Activated naive CD8-positive, alpha-beta T cell treated with anti-CD3 and anti-CD28 coated beads, Interleukin-2, amount 10 ng/mL, durations not matched to agents 7 days and 5 days (primary cell): ENCODE measurements at regions of chr6 and their contacts with region 1.

Region 1: DNA sequence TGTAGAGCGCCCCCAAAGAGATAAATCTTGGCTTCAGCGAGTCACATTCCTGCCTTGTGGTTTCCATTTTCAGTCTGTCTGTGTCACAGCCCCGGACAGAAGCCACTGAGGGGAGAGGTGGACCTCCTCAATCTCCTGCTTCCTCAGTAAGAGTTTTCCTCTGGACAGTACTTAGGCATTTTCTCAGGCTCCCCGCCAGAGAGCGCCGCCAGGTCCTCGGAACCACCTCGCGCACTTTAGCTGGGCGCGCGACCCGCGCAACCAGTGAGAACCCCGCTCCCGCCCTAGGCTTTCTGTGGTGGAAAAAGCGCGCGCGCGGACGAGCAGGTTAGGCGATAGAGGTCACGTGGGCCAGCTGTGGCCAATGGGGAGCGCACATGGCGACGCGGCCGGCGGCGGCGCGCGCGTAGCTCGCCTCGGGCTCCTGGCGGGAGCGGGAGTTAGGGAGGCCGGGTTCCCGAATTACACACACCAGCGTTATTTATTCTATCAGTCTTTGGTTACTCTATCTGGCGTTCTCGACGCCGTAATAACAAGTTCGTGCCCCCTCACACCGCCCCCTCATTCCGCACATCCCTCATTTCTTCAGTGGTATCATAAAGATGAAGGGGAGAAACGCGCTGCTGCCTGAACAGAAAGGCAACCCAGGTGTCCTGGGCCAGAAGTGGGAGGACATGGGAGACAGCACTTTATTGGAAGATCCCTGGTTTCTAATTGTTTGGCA is 19.4 kb downstream of the PXT1 start:
- DNase-seq: peak; percentile 97
- ATAC-seq: peak; percentile 97
- H3K4me3 Mint-ChIP-seq: peak overlapping the region; percentile 90
- H3K27ac Mint-ChIP-seq: peak overlapping the region; percentile 86
- H3K4me1 Mint-ChIP-seq: peaks cover 14% of the 10 kb centered on the region
- H3K27me3 Mint-ChIP-seq: peaks cover 7% of the 10 kb centered on the region

Region 2: GRCh38 chr6:36441307-36441894 is 18.1 kb after region 1 on chr6:
- POLR2A ChIA-PET with region 1: interaction called, 11 read pairs
- DNase-seq: peak; percentile 71
- ATAC-seq: peak; percentile 74
- H3K4me3 Mint-ChIP-seq: peak overlapping the region; percentile 66
- H3K27ac Mint-ChIP-seq: peak overlapping the region; percentile 92
- H3K4me1 Mint-ChIP-seq: peaks cover 29% of the 10 kb centered on the region
- H3K27me3 Mint-ChIP-seq: no peaks in the 10 kb centered on the region